Activated naive CD4-positive, alpha-beta T cell treated with anti-CD3 and anti-CD28 coated beads for 36 hours (primary cell): ENCODE measurements at regions of chr18 and their contacts with region 1.

Region 1: DNA sequence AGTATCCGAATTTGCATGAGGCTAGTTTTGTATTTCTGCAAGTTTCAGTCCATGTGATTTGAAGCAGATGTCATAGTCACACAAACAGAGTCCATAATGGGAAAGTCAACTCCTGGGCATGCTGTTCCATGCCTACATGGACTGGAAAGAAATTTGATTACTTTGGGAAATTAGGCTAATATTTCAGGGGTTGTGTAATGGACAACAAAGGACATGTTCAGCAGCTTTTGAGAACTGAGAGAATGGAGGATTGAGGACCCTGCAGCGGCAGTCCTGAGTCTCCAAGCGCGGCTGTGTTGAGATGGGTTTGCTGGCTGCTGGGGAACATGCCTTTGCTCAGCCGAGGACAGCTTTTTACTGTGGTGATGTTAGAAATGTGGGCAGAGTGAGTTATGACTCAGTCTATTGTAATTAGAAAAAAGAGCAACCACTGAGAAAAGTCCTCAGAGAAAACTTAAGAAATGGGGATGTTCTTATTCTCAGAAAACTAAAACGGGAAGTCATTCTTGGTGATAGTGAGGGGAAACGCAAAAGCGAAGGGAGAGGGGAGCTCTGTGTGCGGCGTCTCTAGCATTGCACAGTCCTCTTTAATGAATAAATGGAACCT is 149.2 kb downstream of the FAM210A start:
- DNase-seq: peak; percentile 71
- H3K4me3 Mint-ChIP-seq: peak overlapping the region; percentile 5
- H3K27ac Mint-ChIP-seq: peak overlapping the region; percentile 55
- H3K4me1 Mint-ChIP-seq: peaks cover 36% of the 10 kb centered on the region
- H3K27me3 Mint-ChIP-seq: no peaks in the 10 kb centered on the region

Region 2: GRCh38 chr18:13175754-13176210 is 401.4 kb before region 1 on chr18:
- CTCF ChIA-PET with region 1: no interaction called
- intact Hi-C with region 1: loop called (anchors 5 kb)
- DNase-seq: peak; percentile 72
- H3K4me3 Mint-ChIP-seq: no peak overlapping the region
- H3K27ac Mint-ChIP-seq: no peak overlapping the region
- H3K4me1 Mint-ChIP-seq: peaks cover 12% of the 10 kb centered on the region
- H3K27me3 Mint-ChIP-seq: no peaks in the 10 kb centered on the region